ENCODE measurements at regions of chr7 and their contacts with region 1.

Region 1: GRCh38 chr7:31122649-31123058 is 70.5 kb downstream of the ADCYAP1R1 start:
- DNase-seq: peak in 17 of 35 experiments; percentile 6 to 58 (median 15)
- ATAC-seq: peak in 1 of 4 experiments; percentile 36
- H3K4me3 ChIP-seq: no peak overlapping the region
- H3K4me3 Mint-ChIP-seq: no peak overlapping the region
- H3K27ac ChIP-seq: no peak overlapping the region
- H3K27ac Mint-ChIP-seq: no peak overlapping the region
- H3K4me1 ChIP-seq: no peaks in the 10 kb centered on the region
- H3K4me1 Mint-ChIP-seq: peaks cover 0 to 7% (median 0%) of the 10 kb centered on the region in 3 donors
- H3K27me3 ChIP-seq: peaks cover 0 to 12% of the 10 kb centered on the region in 2 experiments
- H3K27me3 Mint-ChIP-seq: peaks cover 6 to 10% of the 10 kb centered on the region in 2 donors

Region 2: DNA sequence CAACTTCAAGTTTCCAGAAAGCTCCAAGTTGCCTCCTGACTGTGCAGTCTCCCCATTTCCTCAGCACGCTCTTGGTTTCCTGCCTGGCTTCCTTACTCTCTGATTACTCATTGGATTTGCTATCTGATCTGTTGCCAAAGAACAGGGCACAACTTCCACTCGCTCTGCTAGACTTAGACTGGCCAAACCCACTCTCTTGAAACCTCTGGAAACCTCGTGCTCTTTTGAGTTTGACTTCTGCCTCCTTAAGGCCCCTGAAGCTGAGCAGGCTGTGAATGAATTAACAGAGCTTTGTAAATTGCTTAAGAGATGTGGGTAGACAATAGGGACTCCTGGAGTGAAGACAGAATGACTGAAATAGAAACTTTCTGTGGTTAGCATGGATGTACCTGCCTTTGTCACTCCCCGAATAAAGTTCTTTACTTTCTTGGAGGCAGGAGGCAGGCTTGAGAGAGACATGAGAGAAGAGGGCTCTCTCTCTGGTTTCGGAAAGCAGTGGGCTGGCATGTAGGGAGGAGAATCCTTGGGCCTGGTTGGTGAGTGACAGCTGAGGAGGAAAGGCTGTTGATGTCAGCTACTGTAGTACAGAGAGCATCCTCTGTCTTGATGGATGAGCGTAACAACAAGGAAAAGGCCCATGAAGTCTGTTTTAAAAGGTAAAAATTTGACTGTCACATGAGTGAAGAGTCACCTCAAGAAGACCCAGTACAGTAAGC is 1857.3 kb before region 1 on chr7:
- CTCF ChIA-PET with region 1: no interaction called
- POLR2A ChIA-PET with region 1: no interaction called
- DNase-seq: no peak
- ATAC-seq: no peak
- H3K4me3 ChIP-seq: no peak overlapping the region
- H3K4me3 Mint-ChIP-seq: no peak overlapping the region
- H3K27ac ChIP-seq: no peak overlapping the region
- H3K27ac Mint-ChIP-seq: no peak overlapping the region
- H3K4me1 ChIP-seq: peaks cover 0 to 3% of the 10 kb centered on the region in 2 experiments
- H3K4me1 Mint-ChIP-seq: peaks cover 0 to 12% (median 4%) of the 10 kb centered on the region in 3 donors
- H3K27me3 ChIP-seq: no peaks in the 10 kb centered on the region
- H3K27me3 Mint-ChIP-seq: no peaks in the 10 kb centered on the region

Region 3: GRCh38 chr7:30983042-30983913 is 139.4 kb before region 1 on chr7:
- CTCF ChIA-PET with region 1: interaction called, 50 to 75 read pairs
- POLR2A ChIA-PET with region 1: interaction called in 1 of 2 experiments, 3 read pairs
- DNase-seq: peak in 34 of 35 experiments; percentile 10 to 81 (median 61)
- ATAC-seq: peak; percentile 74 to 81 (median 79)
- H3K4me3 ChIP-seq: no peak overlapping the region
- H3K4me3 Mint-ChIP-seq: peak overlapping the region in 1 of 3 donors; percentile 61
- H3K27ac ChIP-seq: no peak overlapping the region
- H3K27ac Mint-ChIP-seq: no peak overlapping the region
- H3K4me1 ChIP-seq: peaks cover 0 to 17% of the 10 kb centered on the region in 2 experiments
- H3K4me1 Mint-ChIP-seq: peaks cover 8 to 40% (median 15%) of the 10 kb centered on the region in 3 donors
- H3K27me3 ChIP-seq: peaks cover 8 to 44% of the 10 kb centered on the region in 2 experiments
- H3K27me3 Mint-ChIP-seq: peaks cover 31 to 47% of the 10 kb centered on the region in 2 donors

Region 4: GRCh38 chr7:31134246-31135188 is 11.9 kb after region 1 on chr7:
- CTCF ChIA-PET with region 1: interaction called, 10 to 19 read pairs
- POLR2A ChIA-PET with region 1: no interaction called
- DNase-seq: peak in 23 of 35 experiments; percentile 4 to 63 (median 18)
- ATAC-seq: peak; percentile 43 to 61 (median 52)
- H3K4me3 ChIP-seq: no peak overlapping the region
- H3K4me3 Mint-ChIP-seq: no peak overlapping the region
- H3K27ac ChIP-seq: no peak overlapping the region
- H3K27ac Mint-ChIP-seq: no peak overlapping the region
- H3K4me1 ChIP-seq: peaks cover 0 to 6% of the 10 kb centered on the region in 2 experiments
- H3K4me1 Mint-ChIP-seq: peaks cover 2 to 5% (median 4%) of the 10 kb centered on the region in 3 donors
- H3K27me3 ChIP-seq: peaks cover 0 to 10% of the 10 kb centered on the region in 2 experiments
- H3K27me3 Mint-ChIP-seq: peaks cover 0 to 4% of the 10 kb centered on the region in 2 donors